Activated CD4-positive, alpha-beta T cell treated with anti-CD3 and anti-CD28 coated beads, Interleukin-2, amount 10 ng/mL, durations not matched to agents 24 days and 14 days (primary cell): ENCODE measurements at regions of chr5 and their contacts with region 1.

Region 1: GRCh38 chr5:100424787-100425186 is 110.4 kb upstream of the FAM174A start:
- DNase-seq: no peak
- H3K4me3 Mint-ChIP-seq: no peak overlapping the region
- H3K27ac Mint-ChIP-seq: no peak overlapping the region
- H3K4me1 Mint-ChIP-seq: no peaks in the 10 kb centered on the region
- H3K27me3 Mint-ChIP-seq: no peaks in the 10 kb centered on the region

Region 2: GRCh38 chr5:101036778-101037177 is 612.0 kb after region 1 on chr5:
- intact Hi-C with region 1: loop called (anchors 5 kb)
- DNase-seq: no peak
- H3K4me3 Mint-ChIP-seq: no peak overlapping the region
- H3K27ac Mint-ChIP-seq: no peak overlapping the region
- H3K4me1 Mint-ChIP-seq: no peaks in the 10 kb centered on the region
- H3K27me3 Mint-ChIP-seq: peaks cover 10% of the 10 kb centered on the region